ENCODE measurements at regions of chr19 and their contacts with region 1.

Region 1: GRCh38 chr19:39532233-39533002 is at the start of gene EID2B:
- DNase-seq: peak; percentile 92 to 95 (median 94)
- H3K4me3 ChIP-seq: peak within 1 kb of the TSS; percentile 19 to 92
- H3K4me3 Mint-ChIP-seq: peak within 1 kb of the TSS; percentile 91 to 96 (median 94)
- H3K27ac ChIP-seq: peak within 1 kb of the TSS; percentile 83
- H3K27ac Mint-ChIP-seq: peak within 1 kb of the TSS; percentile 81 to 95 (median 92)
- H3K4me1 ChIP-seq: peaks cover 20% of the 10 kb centered on the region
- H3K4me1 Mint-ChIP-seq: peaks cover 14 to 43% (median 28%) of the 10 kb centered on the region in 4 donors
- H3K27me3 ChIP-seq: no peaks in the 10 kb centered on the region
- H3K27me3 Mint-ChIP-seq: no peaks in the 10 kb centered on the region
- total RNA-seq, gene EID2B: 7.7 to 8.8 TPM

Region 2: DNA sequence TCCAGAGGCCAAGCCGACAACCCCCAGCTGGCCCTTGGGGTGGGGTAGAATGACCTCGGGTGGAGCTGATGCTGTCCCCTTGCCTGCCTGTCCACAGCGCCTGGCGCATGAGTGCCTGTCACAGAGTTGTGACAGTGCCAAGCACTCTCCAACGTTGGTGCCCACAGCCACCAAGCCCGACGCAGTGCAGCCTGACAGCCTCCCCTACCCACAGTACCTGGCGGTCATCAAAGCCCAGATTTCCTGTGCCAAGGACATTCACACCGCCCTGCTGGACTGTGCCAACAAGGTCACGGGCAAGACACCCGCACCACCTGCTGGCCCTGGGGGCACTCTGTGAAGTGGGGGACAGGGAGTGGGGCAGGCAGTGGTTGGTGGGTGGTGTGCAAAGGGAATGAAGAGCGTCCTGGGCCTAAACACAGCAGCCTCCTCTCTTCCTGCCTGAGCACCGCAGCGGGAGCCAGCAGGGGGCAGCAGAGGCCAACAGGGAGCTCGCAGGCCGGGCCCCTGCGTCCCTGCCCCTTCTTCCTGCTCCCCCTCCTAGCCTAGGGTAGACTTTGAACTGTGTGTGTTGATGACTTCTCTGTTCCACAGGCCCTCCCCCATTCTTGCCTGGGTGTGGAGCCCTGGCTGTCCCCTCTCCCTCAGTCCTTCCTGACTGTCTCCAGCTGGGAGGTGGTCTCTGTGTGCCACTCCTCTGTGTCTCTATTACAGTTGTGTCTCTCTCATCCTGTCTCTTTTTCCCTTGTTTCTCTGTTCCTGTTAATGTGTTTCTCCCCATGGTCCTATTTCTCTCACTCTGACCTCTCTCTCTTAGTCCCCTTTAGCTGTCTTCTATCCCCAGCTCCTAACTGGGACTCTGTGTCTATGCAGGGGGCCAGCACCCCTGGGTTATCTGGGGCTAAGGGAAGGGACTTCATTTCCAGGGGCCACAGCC is 134.8 kb before region 1 on chr19:
- CTCF ChIA-PET with region 1: interaction called, 6 read pairs
- POLR2A ChIA-PET with region 1: no interaction called
- intact Hi-C with region 1: loop called (anchors 2 kb)
- DNase-seq: peak; percentile 90 to 91 (median 91)
- H3K4me3 ChIP-seq: peak overlapping the region in 1 of 2 donors; percentile 21
- H3K4me3 Mint-ChIP-seq: peak overlapping the region; percentile 57 to 70 (median 64)
- H3K27ac ChIP-seq: peak overlapping the region; percentile 72
- H3K27ac Mint-ChIP-seq: peak overlapping the region; percentile 94 to 100 (median 97)
- H3K4me1 ChIP-seq: peaks cover 58% of the 10 kb centered on the region
- H3K4me1 Mint-ChIP-seq: peaks cover 32 to 67% (median 53%) of the 10 kb centered on the region in 4 donors
- H3K27me3 ChIP-seq: no peaks in the 10 kb centered on the region
- H3K27me3 Mint-ChIP-seq: no peaks in the 10 kb centered on the region

Region 3: DNA sequence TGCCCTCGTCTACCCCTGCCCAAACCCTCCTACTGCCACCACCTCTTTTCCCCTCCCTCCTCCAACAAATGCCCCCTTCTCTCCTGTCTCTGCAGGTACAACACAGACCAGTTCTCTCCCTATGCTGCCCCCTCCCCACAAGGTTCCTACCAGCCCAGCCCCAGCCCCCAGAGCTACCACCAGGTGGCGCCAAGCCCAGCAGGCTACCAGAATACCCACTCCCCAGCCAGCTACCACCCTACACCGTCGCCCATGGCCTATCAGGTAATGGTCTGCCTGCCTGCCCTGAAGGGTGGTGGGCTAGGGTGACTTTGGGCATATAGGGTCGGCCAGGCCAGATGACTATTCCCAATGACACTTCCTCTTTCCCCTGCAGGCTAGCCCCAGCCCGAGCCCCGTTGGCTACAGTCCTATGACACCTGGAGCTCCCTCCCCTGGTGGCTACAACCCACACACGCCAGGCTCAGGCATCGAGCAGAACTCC is 58.2 kb before region 1 on chr19:
- CTCF ChIA-PET with region 1: interaction called, 39 read pairs
- POLR2A ChIA-PET with region 1: interaction called, 3 read pairs
- intact Hi-C with region 1: loop called (anchors 1 kb)
- DNase-seq: peak; percentile 64 to 72 (median 70)
- H3K4me3 ChIP-seq: no peak overlapping the region
- H3K4me3 Mint-ChIP-seq: no peak overlapping the region
- H3K27ac ChIP-seq: no peak overlapping the region
- H3K27ac Mint-ChIP-seq: peak overlapping the region in 4 of 7 donors; percentile 46 to 81 (median 56)
- H3K4me1 ChIP-seq: no peaks in the 10 kb centered on the region
- H3K4me1 Mint-ChIP-seq: peaks cover 0 to 6% (median 4%) of the 10 kb centered on the region in 4 donors
- H3K27me3 ChIP-seq: no peaks in the 10 kb centered on the region
- H3K27me3 Mint-ChIP-seq: no peaks in the 10 kb centered on the region

Region 4: DNA sequence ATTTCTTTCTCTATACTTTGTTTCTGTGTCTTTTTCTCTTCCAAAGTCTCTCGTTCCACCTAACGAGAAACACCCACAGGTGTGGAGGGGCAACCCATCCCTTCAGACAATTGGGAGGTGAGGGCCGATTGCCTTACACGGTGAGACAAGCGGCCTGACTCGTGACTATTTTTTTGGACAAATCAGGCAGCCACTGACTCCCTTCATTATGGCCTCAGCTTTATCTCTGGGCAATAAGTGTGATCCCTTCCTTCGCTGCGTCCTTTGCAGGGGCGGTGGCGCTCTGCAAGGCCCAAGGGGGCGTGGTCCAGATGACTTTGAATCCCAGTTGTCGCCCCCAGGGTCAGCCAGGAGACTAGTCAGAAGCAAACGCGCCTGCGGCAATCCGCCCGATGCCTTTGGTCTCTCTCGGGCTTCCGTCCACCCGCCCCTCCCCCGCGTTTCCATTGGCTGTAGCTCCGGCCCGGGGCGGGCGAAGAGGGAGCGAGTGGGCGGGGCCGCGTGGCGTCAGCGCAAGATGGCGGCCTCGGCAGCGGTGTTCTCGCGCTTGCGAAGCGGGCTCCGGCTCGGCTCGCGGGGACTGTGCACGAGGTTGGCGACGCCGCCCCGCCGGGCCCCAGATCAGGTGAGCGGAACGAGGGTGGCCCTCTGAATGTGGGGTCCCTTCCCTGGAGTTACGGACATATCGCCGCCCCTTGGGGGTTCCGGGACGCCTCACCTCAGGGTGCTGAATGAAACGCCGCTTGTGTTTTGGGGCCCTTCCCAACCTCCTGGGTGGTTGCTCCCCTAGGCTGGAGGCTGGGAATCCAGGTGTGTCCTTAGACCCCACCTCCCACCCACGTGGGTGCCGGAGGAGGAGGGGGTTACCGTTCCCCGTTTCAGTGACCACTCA is 51.8 kb before region 1 on chr19 and contains the start of gene TIMM50:
- CTCF ChIA-PET with region 1: interaction called, 39 read pairs
- POLR2A ChIA-PET with region 1: interaction called, 6 read pairs
- intact Hi-C with region 1: loop called (anchors 1 kb)
- DNase-seq: peak; percentile 93 to 96 (median 94)
- H3K4me3 ChIP-seq: peak within 1 kb of the TSS; percentile 83 to 93
- H3K4me3 Mint-ChIP-seq: peak within 1 kb of the TSS; percentile 90 to 96 (median 94)
- H3K27ac ChIP-seq: peak within 1 kb of the TSS; percentile 82
- H3K27ac Mint-ChIP-seq: peak within 1 kb of the TSS; percentile 92 to 98 (median 96)
- H3K4me1 ChIP-seq: peaks cover 17% of the 10 kb centered on the region
- H3K4me1 Mint-ChIP-seq: peaks cover 15 to 41% (median 25%) of the 10 kb centered on the region in 4 donors
- H3K27me3 ChIP-seq: no peaks in the 10 kb centered on the region
- H3K27me3 Mint-ChIP-seq: no peaks in the 10 kb centered on the region
- total RNA-seq, gene TIMM50: 47.2 to 49.6 TPM

Region 5: DNA sequence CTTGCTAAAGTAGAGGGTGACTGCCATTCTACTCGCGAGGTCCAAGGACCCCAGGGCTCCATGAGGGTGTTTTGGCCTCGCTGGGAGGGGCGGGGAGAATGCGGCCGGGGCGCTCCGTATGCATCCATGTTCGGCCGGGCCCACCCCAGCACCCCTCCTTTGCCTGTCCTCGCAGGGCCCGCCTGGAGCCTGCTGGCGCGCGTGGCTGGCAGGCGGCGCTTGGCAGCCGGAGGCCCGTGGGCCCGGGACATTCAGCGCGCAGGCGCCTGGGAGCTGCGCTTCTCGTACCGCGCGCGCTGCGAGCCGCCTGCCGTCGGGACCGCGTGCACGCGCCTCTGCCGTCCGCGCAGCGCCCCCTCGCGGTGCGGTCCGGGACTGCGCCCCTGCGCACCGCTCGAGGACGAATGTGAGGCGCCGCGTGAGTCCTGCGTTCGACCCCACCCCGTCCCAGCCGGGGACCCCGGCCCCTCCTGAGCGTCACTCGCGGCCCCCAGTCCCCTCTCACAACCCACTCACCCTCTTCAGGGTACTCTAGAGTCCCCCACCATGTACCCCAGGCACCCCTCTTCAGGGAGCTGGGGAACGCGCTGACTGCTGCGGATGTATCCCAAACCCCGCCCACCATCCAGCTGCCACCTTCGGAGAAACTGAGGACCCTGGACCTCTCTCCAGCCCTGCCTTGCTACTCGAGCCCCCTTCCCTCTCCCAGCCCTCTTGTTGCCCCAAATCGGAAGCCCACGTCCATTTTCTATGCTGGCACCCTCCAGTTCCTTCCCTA is 29.6 kb before region 1 on chr19:
- CTCF ChIA-PET with region 1: interaction called, 11 read pairs
- POLR2A ChIA-PET with region 1: interaction called, 4 read pairs
- intact Hi-C with region 1: loop called (anchors 5 kb)
- DNase-seq: peak; percentile 72 to 82 (median 81)
- H3K4me3 ChIP-seq: no peak overlapping the region
- H3K4me3 Mint-ChIP-seq: peak overlapping the region in 4 of 8 donors; percentile 9 to 61 (median 40)
- H3K27ac ChIP-seq: no peak overlapping the region
- H3K27ac Mint-ChIP-seq: peak overlapping the region in 2 of 7 donors; percentile 36 to 71
- H3K4me1 ChIP-seq: peaks cover 36% of the 10 kb centered on the region
- H3K4me1 Mint-ChIP-seq: peaks cover 24 to 65% (median 33%) of the 10 kb centered on the region in 4 donors
- H3K27me3 ChIP-seq: peaks cover 34% of the 10 kb centered on the region
- H3K27me3 Mint-ChIP-seq: peaks cover 45 to 59% of the 10 kb centered on the region in 2 donors

Region 6: DNA sequence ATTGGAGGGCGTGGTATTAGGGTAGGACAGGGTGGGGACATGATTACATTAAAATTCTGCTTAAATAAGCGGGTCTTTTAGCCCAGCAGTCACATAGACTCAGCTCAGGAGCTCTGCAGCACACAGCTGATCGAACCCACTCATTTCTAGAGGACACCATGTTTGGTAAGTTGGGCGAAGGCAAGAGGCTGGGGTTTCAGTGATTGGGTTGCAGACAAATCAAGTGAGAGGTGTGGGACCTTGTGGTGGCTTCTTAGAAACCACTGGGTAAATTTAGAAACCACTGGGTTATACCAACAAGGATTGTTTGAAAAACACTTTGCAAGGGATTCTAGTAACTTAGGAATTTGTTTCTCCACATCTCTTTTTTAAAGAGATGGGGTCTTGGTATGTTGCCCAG is 246.3 kb after region 1 on chr19 and contains the start of gene LEUTX:
- CTCF ChIA-PET with region 1: no interaction called
- POLR2A ChIA-PET with region 1: no interaction called
- intact Hi-C with region 1: no loop called
- DNase-seq: no peak
- H3K4me3 ChIP-seq: no peak within 1 kb of the TSS
- H3K4me3 Mint-ChIP-seq: no peak within 1 kb of the TSS
- H3K27ac ChIP-seq: no peak within 1 kb of the TSS
- H3K27ac Mint-ChIP-seq: peak within 1 kb of the TSS in 1 of 7 donors; percentile 19
- H3K4me1 ChIP-seq: no peaks in the 10 kb centered on the region
- H3K4me1 Mint-ChIP-seq: no peaks in the 10 kb centered on the region
- H3K27me3 ChIP-seq: peaks cover 5% of the 10 kb centered on the region
- H3K27me3 Mint-ChIP-seq: peaks cover 16 to 18% of the 10 kb centered on the region in 2 donors
- total RNA-seq, gene LEUTX: not detected